ENCODE measurements at regions of chrX and their contacts with region 1.

Region 1: DNA sequence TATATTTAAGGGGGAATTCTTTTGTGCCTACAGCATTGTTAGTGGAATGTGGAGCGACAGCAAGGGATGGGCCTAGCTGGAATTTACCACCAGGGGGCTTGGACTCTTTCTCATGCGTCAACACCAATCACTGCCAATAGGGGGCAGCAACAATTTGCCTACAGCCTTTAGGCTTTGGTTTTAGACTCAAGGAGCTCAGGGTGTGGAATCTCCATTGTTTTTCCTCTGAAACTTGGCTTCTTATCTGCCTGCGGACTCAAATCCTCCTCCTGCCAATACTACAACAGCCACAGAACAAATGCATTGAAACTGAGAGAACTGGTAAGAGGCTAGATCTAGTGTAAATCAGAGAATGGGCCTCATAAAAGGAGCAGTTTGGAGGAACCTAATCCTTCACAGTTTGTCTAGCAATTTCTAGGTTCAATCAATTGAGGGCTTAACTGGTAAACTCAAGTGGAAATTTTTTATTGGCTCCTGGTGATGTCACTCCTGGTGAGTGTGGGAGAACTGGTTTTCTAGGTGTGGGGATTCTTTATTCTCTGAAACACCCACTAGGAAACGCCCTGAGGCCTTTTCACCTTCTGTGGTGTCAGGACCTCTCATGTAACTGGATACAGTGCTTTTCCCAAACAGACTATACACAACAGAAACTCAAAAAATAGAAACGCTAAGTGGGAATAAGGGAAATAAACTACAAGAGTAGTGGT is 27.9 kb upstream of the TMSB4X start:
- DNase-seq: peak; percentile 85
- ATAC-seq: peak; percentile 9
- H3K4me3 ChIP-seq: no peak overlapping the region
- H3K27ac ChIP-seq: peak overlapping the region; percentile 97
- H3K4me1 ChIP-seq: peaks cover 41% of the 10 kb centered on the region
- H3K27me3 ChIP-seq: no peaks in the 10 kb centered on the region
- CTCF ChIP-seq: peak; percentile 97 to 100 (median 99); a peak in 5 of 6 replicates
- EP300 ChIP-seq: no peak
- POLR2A ChIP-seq: no peak
- RAD21 ChIP-seq: peak; percentile 98

Region 2: GRCh38 chrX:12894074-12895030 is 52.6 kb before region 1 on chrX:
- CTCF ChIA-PET with region 1: interaction called, 8 read pairs
- POLR2A ChIA-PET with region 1: no interaction called
- RAD21 ChIA-PET with region 1: no interaction called
- SMC1A ChIA-PET with region 1: interaction called, 7 read pairs
- in situ Hi-C with region 1: no loop called
- intact Hi-C with region 1: loop called (anchors 5 kb)
- DNase-seq: no peak
- ATAC-seq: peak; percentile 61
- H3K4me3 ChIP-seq: no peak overlapping the region
- H3K27ac ChIP-seq: no peak overlapping the region
- H3K4me1 ChIP-seq: peaks cover 43% of the 10 kb centered on the region
- H3K27me3 ChIP-seq: no peaks in the 10 kb centered on the region
- CTCF ChIP-seq: peak; percentile 84 to 88 (median 84)
- EP300 ChIP-seq: no peak
- POLR2A ChIP-seq: no peak
- RAD21 ChIP-seq: peak; percentile 96

Region 3: DNA sequence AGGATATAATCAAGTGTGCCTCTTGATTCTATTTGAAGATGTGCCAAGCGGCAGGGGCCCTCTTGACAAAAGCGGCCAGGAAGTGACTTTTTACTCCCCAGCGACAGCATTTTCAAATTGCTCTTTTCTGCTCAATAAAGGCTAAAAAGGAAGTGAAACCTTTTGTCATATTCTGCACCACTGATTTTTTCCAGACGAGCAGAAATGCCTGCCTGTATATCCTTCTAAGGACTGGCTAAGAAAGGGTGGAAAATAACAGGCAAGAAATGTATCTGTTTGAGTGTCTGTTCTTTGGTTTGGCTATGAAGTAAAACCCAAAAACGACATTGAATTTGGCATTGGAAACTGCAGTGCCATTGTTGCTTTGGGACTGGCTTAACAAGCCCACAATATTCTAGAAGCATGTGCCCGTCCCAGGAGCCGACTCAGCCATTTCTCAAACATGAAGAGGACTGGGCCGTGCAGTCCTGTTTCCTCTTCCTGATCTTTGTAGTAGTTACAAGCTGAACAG is 53.4 kb after region 1 on chrX:
- CTCF ChIA-PET with region 1: interaction called, 123 read pairs
- POLR2A ChIA-PET with region 1: interaction called, 13 read pairs
- RAD21 ChIA-PET with region 1: interaction called, 66 read pairs
- SMC1A ChIA-PET with region 1: interaction called, 409 read pairs
- in situ Hi-C with region 1: loop called (anchors 5 kb)
- intact Hi-C with region 1: loop called (anchors 1 kb)
- DNase-seq: peak; percentile 90
- ATAC-seq: peak; percentile 52
- H3K4me3 ChIP-seq: peak overlapping the region; percentile 9; the same call in 1 of the 2 replicates
- H3K27ac ChIP-seq: peak overlapping the region; percentile 91
- H3K4me1 ChIP-seq: peaks cover 69% of the 10 kb centered on the region
- H3K27me3 ChIP-seq: no peaks in the 10 kb centered on the region
- CTCF ChIP-seq: no peak
- EP300 ChIP-seq: peak; percentile 73; a peak in 2 of 4 replicates
- POLR2A ChIP-seq: no peak
- RAD21 ChIP-seq: peak; percentile 10; the same call in 1 of the 2 replicates

Region 4: GRCh38 chrX:13051529-13052172 is 104.7 kb after region 1 on chrX:
- CTCF ChIA-PET with region 1: interaction called, 19 read pairs
- POLR2A ChIA-PET with region 1: interaction called, 4 read pairs
- RAD21 ChIA-PET with region 1: interaction called, 33 read pairs
- SMC1A ChIA-PET with region 1: interaction called, 68 read pairs
- in situ Hi-C with region 1: no loop called
- intact Hi-C with region 1: loop called (anchors 1 kb)
- DNase-seq: peak; percentile 71
- ATAC-seq: peak; percentile 71
- H3K4me3 ChIP-seq: no peak overlapping the region
- H3K27ac ChIP-seq: peak overlapping the region; percentile 69
- H3K4me1 ChIP-seq: peaks cover 48% of the 10 kb centered on the region
- H3K27me3 ChIP-seq: no peaks in the 10 kb centered on the region
- CTCF ChIP-seq: no peak
- EP300 ChIP-seq: peak; percentile 85 to 95; a peak in 3 of 4 replicates
- POLR2A ChIP-seq: no peak
- RAD21 ChIP-seq: no peak

Region 5: GRCh38 chrX:13263560-13264251 is 316.7 kb after region 1 on chrX:
- CTCF ChIA-PET with region 1: interaction called, 17 read pairs
- POLR2A ChIA-PET with region 1: no interaction called
- RAD21 ChIA-PET with region 1: interaction called, 137 read pairs
- SMC1A ChIA-PET with region 1: interaction called, 16 read pairs
- in situ Hi-C with region 1: loop called (anchors 5 kb)
- intact Hi-C with region 1: no loop called
- DNase-seq: peak; percentile 66
- ATAC-seq: peak; percentile 92
- H3K4me3 ChIP-seq: no peak overlapping the region; the same call in 1 of the 2 replicates
- H3K27ac ChIP-seq: peak overlapping the region; percentile 66
- H3K4me1 ChIP-seq: peaks cover 20% of the 10 kb centered on the region
- H3K27me3 ChIP-seq: no peaks in the 10 kb centered on the region
- CTCF ChIP-seq: no peak
- EP300 ChIP-seq: no peak; a peak in 1 of 4 replicates
- POLR2A ChIP-seq: no peak
- RAD21 ChIP-seq: no peak

Region 6: GRCh38 chrX:13478740-13479451 is 531.9 kb after region 1 on chrX:
- CTCF ChIA-PET with region 1: interaction called, 14 read pairs
- POLR2A ChIA-PET with region 1: no interaction called
- RAD21 ChIA-PET with region 1: interaction called, 16 read pairs
- SMC1A ChIA-PET with region 1: interaction called, 6 read pairs
- in situ Hi-C with region 1: loop called (anchors 5 kb)
- intact Hi-C with region 1: no loop called
- DNase-seq: no peak
- ATAC-seq: no peak
- H3K4me3 ChIP-seq: no peak overlapping the region
- H3K27ac ChIP-seq: no peak overlapping the region
- H3K4me1 ChIP-seq: no peaks in the 10 kb centered on the region
- H3K27me3 ChIP-seq: no peaks in the 10 kb centered on the region
- CTCF ChIP-seq: no peak
- EP300 ChIP-seq: no peak
- POLR2A ChIP-seq: no peak
- RAD21 ChIP-seq: no peak

Region 7: GRCh38 chrX:13699183-13699826 is 752.3 kb after region 1 on chrX:
- CTCF ChIA-PET with region 1: interaction called, 4 read pairs
- POLR2A ChIA-PET with region 1: no interaction called
- RAD21 ChIA-PET with region 1: no interaction called
- SMC1A ChIA-PET with region 1: no interaction called
- in situ Hi-C with region 1: no loop called
- intact Hi-C with region 1: loop called (anchors 10 kb)
- DNase-seq: no peak
- ATAC-seq: peak; percentile 53
- H3K4me3 ChIP-seq: peak overlapping the region; percentile 37; the same call in 1 of the 2 replicates
- H3K27ac ChIP-seq: peak overlapping the region; percentile 69
- H3K4me1 ChIP-seq: peaks cover 38% of the 10 kb centered on the region
- H3K27me3 ChIP-seq: no peaks in the 10 kb centered on the region
- CTCF ChIP-seq: no peak
- EP300 ChIP-seq: no peak
- POLR2A ChIP-seq: no peak
- RAD21 ChIP-seq: no peak